Naive thymus-derived CD8-positive, alpha-beta T cell (primary cell): ENCODE measurements at regions of chr15 and their contacts with region 1.

Region 1: DNA sequence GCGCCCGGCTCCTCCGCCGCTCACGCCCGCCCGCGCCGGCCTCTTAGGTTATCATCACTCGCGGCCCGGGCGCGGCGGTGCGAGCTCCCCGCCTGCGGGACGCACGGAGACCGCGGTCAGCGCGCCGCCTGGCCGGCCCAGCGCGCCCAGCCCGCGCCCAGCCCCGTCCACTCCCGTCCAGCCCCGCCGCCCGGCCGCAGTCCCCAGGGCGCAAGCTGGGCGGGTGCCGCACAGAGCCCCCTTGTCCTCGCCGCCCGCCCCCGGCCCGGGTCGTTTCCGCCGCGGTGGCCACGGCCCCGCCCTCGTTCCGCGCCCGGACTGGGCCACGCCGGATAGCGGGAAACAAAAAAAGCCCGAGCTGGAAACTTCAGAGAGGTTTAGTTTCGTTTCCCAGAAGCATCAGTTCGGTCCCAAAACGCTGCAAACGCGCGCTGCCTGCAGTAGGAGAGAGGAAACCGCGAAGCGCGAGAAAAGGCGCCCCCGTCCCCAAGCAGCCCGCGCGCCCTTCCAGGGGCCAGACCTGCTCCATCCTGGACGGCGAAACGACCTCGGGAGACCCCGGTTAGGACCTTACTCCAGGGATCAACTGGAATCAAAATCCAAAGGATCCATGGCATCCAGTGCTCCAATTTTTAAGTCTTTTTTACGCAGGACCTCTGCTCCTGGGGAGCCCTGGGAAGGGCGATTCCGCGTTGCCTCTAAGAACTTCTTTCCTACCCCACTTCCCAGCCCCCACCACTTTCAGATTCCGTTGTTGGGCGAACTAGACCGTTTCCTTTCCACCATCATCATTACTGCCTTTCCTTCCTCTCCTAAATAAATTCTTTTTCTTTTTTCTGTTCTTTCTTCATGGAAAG is at the start of gene ATP10A:
- DNase-seq: peak in 6 of 10 donors; percentile 25 to 51 (median 42)
- ATAC-seq: peak in 1 of 2 donors; percentile 1
- H3K4me3 Mint-ChIP-seq: peak within 1 kb of the TSS; percentile 93 to 96 (median 95)
- H3K27ac Mint-ChIP-seq: peak within 1 kb of the TSS; percentile 97 to 100 (median 98)
- H3K4me1 Mint-ChIP-seq: peaks cover 33 to 50% (median 44%) of the 10 kb centered on the region in 4 donors
- H3K27me3 Mint-ChIP-seq: peaks cover 0 to 8% (median 0%) of the 10 kb centered on the region in 5 donors
- polyA plus RNA-seq, gene ATP10A: 5.2 to 18.1 (median 5.9) TPM

Region 2: GRCh38 chr15:25783607-25784540 is 79.5 kb before region 1 on chr15:
- POLR2A ChIA-PET with region 1: interaction called, 24 read pairs
- DNase-seq: peak in 9 of 10 donors; percentile 19 to 74 (median 43)
- ATAC-seq: peak; percentile 53 to 56
- H3K4me3 Mint-ChIP-seq: peak overlapping the region in 1 of 10 donors; percentile 54
- H3K27ac Mint-ChIP-seq: peak overlapping the region in 6 of 10 donors; percentile 4 to 84 (median 70)
- H3K4me1 Mint-ChIP-seq: peaks cover 24 to 52% (median 43%) of the 10 kb centered on the region in 4 donors
- H3K27me3 Mint-ChIP-seq: no peaks in the 10 kb centered on the region

Region 3: GRCh38 chr15:25811481-25811906 is 51.8 kb before region 1 on chr15:
- POLR2A ChIA-PET with region 1: interaction called, 68 read pairs
- DNase-seq: peak in 3 of 10 donors; percentile 21 to 32 (median 25)
- ATAC-seq: peak; percentile 43 to 48
- H3K4me3 Mint-ChIP-seq: peak overlapping the region; percentile 61 to 91 (median 78)
- H3K27ac Mint-ChIP-seq: peak overlapping the region; percentile 47 to 98 (median 88)
- H3K4me1 Mint-ChIP-seq: peaks cover 43 to 72% (median 68%) of the 10 kb centered on the region in 4 donors
- H3K27me3 Mint-ChIP-seq: no peaks in the 10 kb centered on the region

Region 4: GRCh38 chr15:25850154-25851111 is 12.9 kb before region 1 on chr15:
- POLR2A ChIA-PET with region 1: interaction called, 201 read pairs
- DNase-seq: peak; percentile 42 to 81 (median 59)
- ATAC-seq: peak; percentile 50 to 52
- H3K4me3 Mint-ChIP-seq: peak overlapping the region; percentile 90 to 99 (median 96)
- H3K27ac Mint-ChIP-seq: peak overlapping the region; percentile 88 to 100 (median 98)
- H3K4me1 Mint-ChIP-seq: peaks cover 53 to 97% (median 94%) of the 10 kb centered on the region in 4 donors
- H3K27me3 Mint-ChIP-seq: no peaks in the 10 kb centered on the region

Region 5: GRCh38 chr15:25933456-25934158 is 70.3 kb after region 1 on chr15:
- POLR2A ChIA-PET with region 1: interaction called, 14 read pairs
- DNase-seq: peak; percentile 44 to 84 (median 63)
- ATAC-seq: peak; percentile 98 to 99
- H3K4me3 Mint-ChIP-seq: peak overlapping the region; percentile 81 to 96 (median 92)
- H3K27ac Mint-ChIP-seq: peak overlapping the region in 8 of 10 donors; percentile 32 to 94 (median 79)
- H3K4me1 Mint-ChIP-seq: peaks cover 5 to 10% (median 6%) of the 10 kb centered on the region in 4 donors
- H3K27me3 Mint-ChIP-seq: peaks cover 0 to 8% (median 6%) of the 10 kb centered on the region in 5 donors